BJ (cell line): ENCODE measurements at regions of chr5 and their contacts with region 1.

Region 1: DNA sequence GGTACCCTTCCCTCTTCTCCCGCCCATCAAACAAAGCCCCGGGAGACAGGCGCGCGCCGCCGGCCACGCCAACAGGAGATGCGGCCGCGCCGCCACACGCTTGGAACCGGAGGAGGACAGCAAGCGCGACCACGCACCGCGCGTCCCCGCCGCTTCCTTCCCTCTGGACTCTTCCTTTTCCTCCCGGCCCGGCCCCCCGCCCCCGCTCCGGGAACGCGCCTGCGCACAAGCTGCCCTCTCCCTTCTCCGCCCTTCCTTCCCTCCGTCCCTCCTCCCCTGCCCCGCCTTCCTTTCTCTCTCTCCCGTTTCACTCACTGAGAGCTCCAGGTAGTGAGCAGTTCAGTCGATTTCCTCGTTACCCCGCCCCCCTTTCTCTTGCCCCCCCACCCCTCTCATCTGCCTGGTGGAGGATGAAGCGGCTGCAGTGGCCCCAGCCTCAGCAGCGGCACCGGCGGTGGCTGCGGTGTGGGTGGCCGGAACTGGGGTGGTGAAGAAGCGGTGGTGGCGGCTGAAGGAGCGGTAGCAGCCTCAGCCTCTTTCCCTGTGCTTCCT is at the start of gene RASA1:
- DNase-seq: peak; percentile 51
- H3K4me3 ChIP-seq: peak within 1 kb of the TSS; percentile 93
- H3K27me3 ChIP-seq: no peaks in the 10 kb centered on the region
- CTCF ChIP-seq: no peak
- polyA plus RNA-seq, gene RASA1: 19.8 and 36.8 TPM in 2 replicates

Region 2: GRCh38 chr5:87051502-87052113 is 216.0 kb before region 1 on chr5:
- CTCF ChIA-PET with region 1: no interaction called
- POLR2A ChIA-PET with region 1: interaction called, 11 read pairs
- DNase-seq: no peak
- H3K4me3 ChIP-seq: no peak overlapping the region
- H3K27me3 ChIP-seq: no peaks in the 10 kb centered on the region
- CTCF ChIP-seq: no peak

Region 3: GRCh38 chr5:87313216-87313615 is 45.6 kb after region 1 on chr5:
- CTCF ChIA-PET with region 1: no interaction called
- POLR2A ChIA-PET with region 1: interaction called, 11 read pairs
- DNase-seq: no peak
- H3K4me3 ChIP-seq: no peak overlapping the region
- H3K27me3 ChIP-seq: no peaks in the 10 kb centered on the region
- CTCF ChIP-seq: no peak